ENCODE measurements at regions of chr17 and their contacts with region 1.

Region 1: DNA sequence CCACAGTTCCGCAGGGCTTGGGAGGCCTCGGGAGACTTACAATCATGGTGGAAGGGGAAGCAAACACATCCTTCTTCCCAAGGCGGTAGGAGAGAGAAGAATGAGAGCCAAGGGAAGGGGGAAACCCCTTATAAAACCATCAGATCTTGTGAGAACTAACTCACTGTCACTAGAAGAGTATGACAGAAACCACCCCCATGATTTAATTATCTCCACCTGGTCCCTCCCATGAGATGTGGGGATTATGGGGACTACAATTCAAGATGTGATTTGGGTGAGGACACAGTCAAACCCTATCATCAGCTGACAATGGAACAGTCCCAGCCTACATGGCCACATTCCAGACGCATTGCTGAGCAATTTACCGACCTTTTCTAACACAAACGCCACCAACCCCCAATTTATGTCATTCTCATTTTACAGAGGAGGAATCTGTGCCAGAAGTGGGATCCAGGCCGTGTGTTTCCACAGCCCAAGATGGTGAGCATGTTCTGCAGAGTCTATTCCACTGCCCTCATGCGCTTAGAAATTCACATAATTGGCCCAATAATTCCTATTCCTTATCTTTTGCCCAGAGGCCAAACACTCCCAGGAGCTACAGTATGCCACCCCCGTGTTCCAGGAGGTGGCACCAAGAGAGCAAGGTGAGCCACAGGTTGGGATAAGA is 17.2 kb downstream of the MILR1 start:
- DNase-seq: no peak
- ATAC-seq: no peak
- H3K4me3 Mint-ChIP-seq: no peak overlapping the region
- H3K27ac Mint-ChIP-seq: peak overlapping the region in 2 of 10 donors; percentile 5 to 46
- H3K4me1 Mint-ChIP-seq: peaks cover 0 to 2% (median 0%) of the 10 kb centered on the region in 4 donors
- H3K27me3 Mint-ChIP-seq: peaks cover 0 to 3% (median 0%) of the 10 kb centered on the region in 5 donors

Region 2: GRCh38 chr17:64479650-64480049 is 13.5 kb after region 1 on chr17:
- POLR2A ChIA-PET with region 1: interaction called, 10 read pairs
- DNase-seq: no peak
- ATAC-seq: no peak
- H3K4me3 Mint-ChIP-seq: no peak overlapping the region
- H3K27ac Mint-ChIP-seq: peak overlapping the region in 2 of 10 donors; percentile 53 to 68
- H3K4me1 Mint-ChIP-seq: peaks cover 4 to 9% (median 9%) of the 10 kb centered on the region in 4 donors
- H3K27me3 Mint-ChIP-seq: no peaks in the 10 kb centered on the region